ENCODE measurements at regions of chr3 and their contacts with region 1.

Region 1: GRCh38 chr3:40452876-40453730 is 4.0 kb upstream of the RPL14 start:
- DNase-seq: peak; percentile 90 to 96
- H3K4me3 ChIP-seq: peak overlapping the region; percentile 75 to 91 (median 82)
- H3K27ac ChIP-seq: peak overlapping the region; percentile 94
- H3K4me1 ChIP-seq: peaks cover 0 to 3% (median 0%) of the 10 kb centered on the region in 4 experiments; a peak in 1 of 7 replicates
- H3K27me3 ChIP-seq: no peaks in the 10 kb centered on the region
- CTCF ChIP-seq: peak in 1 of 3 experiments; percentile 4; a peak in 2 of 4 replicates
- EP300 ChIP-seq: no peak
- POLR2A ChIP-seq: peak; percentile 80 to 86
- RAD21 ChIP-seq: peak; percentile 33 to 49

Region 2: DNA sequence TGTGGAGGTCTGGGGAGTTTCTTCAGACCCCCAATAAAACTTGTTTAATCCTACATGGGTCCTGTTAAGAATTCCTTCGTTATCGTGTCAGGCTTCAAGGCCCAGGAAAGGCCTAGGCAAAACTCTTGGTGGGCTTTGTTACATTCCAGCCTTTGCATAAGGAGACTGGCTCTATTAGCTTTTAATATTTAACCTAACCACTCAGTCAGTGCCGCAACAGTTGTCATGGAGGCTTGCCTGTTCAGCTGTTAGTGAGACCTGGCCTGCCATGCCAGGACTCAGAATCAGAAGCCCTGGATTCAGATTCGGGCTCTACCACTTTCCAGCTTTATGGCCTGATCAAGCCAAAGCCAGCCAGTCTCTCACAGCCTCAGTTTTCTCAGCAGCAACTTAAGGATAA is 124.0 kb before region 1 on chr3:
- CTCF ChIA-PET with region 1: interaction called, 5 read pairs
- POLR2A ChIA-PET with region 1: interaction called, 18 read pairs
- DNase-seq: no peak
- H3K4me3 ChIP-seq: no peak overlapping the region
- H3K27ac ChIP-seq: no peak overlapping the region
- H3K4me1 ChIP-seq: peaks cover 0 to 16% (median 5%) of the 10 kb centered on the region in 4 experiments; a peak in 6 of 7 replicates
- H3K27me3 ChIP-seq: no peaks in the 10 kb centered on the region
- CTCF ChIP-seq: no peak
- EP300 ChIP-seq: no peak
- POLR2A ChIP-seq: no peak
- RAD21 ChIP-seq: no peak

Region 3: DNA sequence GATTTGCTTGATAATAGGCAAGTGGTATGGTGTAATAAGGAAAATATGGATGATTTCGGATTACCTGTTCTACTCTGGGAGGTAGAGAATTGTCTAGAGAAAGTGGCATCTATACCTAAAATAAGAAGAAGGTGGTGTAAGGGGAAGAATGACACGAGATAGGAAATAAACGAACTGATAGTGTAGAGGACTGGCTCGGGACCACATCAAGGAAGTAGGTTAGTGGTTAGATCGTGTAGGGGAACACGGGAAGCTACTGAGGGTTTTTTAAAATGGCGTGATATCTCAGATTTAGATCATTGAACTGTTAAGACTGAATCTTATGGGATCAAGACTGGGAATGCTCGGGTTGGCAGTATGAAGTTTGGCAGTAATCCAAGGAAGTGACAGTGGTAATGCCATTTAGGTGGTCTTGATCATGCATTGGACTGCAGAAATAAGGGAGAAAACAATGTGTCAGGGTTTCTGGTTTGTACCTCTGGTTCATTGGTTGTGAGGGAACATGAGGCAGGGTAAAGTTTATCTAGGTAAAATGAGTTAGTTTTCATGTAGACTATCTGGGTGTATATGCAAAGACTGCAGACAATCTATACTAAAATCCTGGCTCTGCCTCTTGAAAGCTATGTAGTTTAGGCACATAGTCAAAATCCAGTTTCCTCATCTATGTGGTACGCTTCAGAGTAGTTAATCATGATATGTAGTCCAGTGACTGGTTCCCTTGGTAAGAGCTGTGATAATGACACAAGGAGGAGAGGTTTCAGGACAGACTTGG is 11.4 kb after region 1 on chr3:
- CTCF ChIA-PET with region 1: interaction called, 3 read pairs
- POLR2A ChIA-PET with region 1: interaction called, 64 read pairs
- DNase-seq: no peak
- H3K4me3 ChIP-seq: no peak overlapping the region
- H3K27ac ChIP-seq: no peak overlapping the region
- H3K4me1 ChIP-seq: no peaks in the 10 kb centered on the region
- H3K27me3 ChIP-seq: no peaks in the 10 kb centered on the region
- CTCF ChIP-seq: no peak
- EP300 ChIP-seq: no peak
- POLR2A ChIP-seq: no peak; a peak in 2 of 3 replicates
- RAD21 ChIP-seq: no peak

Region 4: DNA sequence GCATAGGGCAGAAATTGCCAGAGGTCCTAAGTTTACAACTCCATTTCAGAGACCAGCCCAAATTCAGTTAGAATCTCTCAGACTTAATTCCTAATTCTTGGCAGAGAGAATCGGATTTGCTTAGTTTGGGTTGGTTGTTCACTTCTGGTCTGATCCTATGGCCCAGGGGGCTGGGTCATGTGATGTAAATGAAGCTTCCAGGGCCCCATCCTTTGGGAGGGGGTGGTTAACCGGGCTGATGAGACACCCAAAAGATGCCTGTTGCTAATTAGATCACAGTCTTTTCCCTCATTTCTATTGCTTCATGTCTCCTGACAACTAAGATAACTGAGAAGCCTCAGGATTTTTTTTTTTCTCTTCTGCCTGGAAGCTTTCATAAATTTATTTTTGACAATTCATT is 41.6 kb after region 1 on chr3:
- CTCF ChIA-PET with region 1: no interaction called
- POLR2A ChIA-PET with region 1: interaction called, 13 read pairs
- DNase-seq: no peak
- H3K4me3 ChIP-seq: no peak overlapping the region
- H3K27ac ChIP-seq: no peak overlapping the region
- H3K4me1 ChIP-seq: no peaks in the 10 kb centered on the region
- H3K27me3 ChIP-seq: peaks cover 0 to 2% (median 0%) of the 10 kb centered on the region in 4 experiments; a peak in 1 of 7 replicates
- CTCF ChIP-seq: no peak
- EP300 ChIP-seq: no peak
- POLR2A ChIP-seq: no peak
- RAD21 ChIP-seq: no peak

Region 5: GRCh38 chr3:40524568-40525285 is 71.6 kb after region 1 on chr3 and contains the start of gene ZNF621:
- CTCF ChIA-PET with region 1: no interaction called
- POLR2A ChIA-PET with region 1: interaction called, 23 read pairs
- DNase-seq: peak; percentile 39 to 94
- H3K4me3 ChIP-seq: peak within 1 kb of the TSS; percentile 83 to 85 (median 84)
- H3K27ac ChIP-seq: peak within 1 kb of the TSS; percentile 95
- H3K4me1 ChIP-seq: peaks cover 0 to 4% (median 0%) of the 10 kb centered on the region in 4 experiments; a peak in 2 of 7 replicates
- H3K27me3 ChIP-seq: no peaks in the 10 kb centered on the region
- CTCF ChIP-seq: no peak; a peak in 1 of 4 replicates
- EP300 ChIP-seq: no peak
- POLR2A ChIP-seq: peak; percentile 97 to 99
- RAD21 ChIP-seq: peak in 1 of 2 experiments; percentile 23; a peak in 1 of 4 replicates
- total RNA-seq, gene ZNF621: 15.4 and 15.8 TPM in 2 replicates

Measured in H1 (cell line).